Dendritic cell treated with granulocyte-macrophage colony-stimulating factor and Interleukin-4, amounts not matched to agents 40 ng/mL and 50 ng/mL, for 4 days (primary cell): ENCODE measurements at regions of chr2 and their contacts with region 1.

Region 1: GRCh38 chr2:10043906-10044601 is 704 bp downstream of the KLF11 start:
- H3K4me3 Mint-ChIP-seq: peak overlapping the region; percentile 77
- H3K27ac Mint-ChIP-seq: peak overlapping the region; percentile 91
- H3K4me1 Mint-ChIP-seq: peaks cover 75% of the 10 kb centered on the region
- H3K27me3 Mint-ChIP-seq: peaks cover 14% of the 10 kb centered on the region

Region 2: DNA sequence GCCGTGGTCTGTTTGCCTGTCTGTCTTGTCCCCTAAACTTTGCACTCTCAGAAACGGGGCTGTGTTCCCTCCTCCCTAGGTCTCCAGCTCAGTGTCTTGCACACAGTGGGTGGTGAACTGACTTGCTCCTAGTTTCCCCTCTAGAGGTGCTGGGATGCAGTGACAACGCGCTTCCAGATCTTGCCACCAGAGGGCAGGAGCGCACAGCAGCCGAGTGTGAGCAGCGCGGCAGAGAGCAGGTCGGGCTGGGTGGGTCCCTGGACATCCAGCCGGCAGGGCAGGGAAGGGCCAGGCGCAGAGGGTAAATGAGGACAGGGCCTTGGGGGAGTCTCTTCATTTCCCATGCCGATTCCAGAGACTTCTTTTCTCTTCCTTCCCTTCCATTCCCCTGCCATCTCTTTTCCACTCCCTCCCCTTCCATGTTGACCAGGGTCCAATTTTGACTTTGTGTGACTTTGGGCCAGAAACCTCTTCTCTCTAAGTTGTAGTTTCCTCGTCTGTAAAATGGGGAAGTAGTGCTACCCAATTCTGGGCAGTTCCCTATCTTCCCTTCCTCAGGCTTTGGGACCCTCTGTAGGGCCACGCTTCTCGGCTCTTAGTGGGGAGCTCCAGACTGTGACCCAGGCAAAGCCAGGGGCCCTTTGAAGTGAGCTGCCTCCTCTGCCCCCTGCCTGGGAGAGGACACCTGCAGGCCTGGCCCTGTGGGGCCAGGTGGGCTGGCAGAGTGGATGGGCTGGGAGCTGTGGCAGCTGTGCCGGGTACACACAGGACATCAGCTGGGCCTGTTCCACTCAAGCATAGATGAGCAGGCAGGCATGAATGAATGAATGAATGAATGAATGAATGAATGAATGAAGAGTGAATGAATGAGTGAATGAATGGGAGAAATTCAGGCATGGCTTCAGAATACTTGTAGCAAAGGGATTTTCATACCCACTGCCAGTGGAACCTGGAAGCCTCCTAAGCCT is 244.1 kb before region 1 on chr2:
- intact Hi-C with region 1: loop called (anchors 5 kb)
- H3K4me3 Mint-ChIP-seq: peak overlapping the region; percentile 60
- H3K27ac Mint-ChIP-seq: peak overlapping the region; percentile 88
- H3K4me1 Mint-ChIP-seq: peaks cover 63% of the 10 kb centered on the region
- H3K27me3 Mint-ChIP-seq: peaks cover 2% of the 10 kb centered on the region

Region 3: DNA sequence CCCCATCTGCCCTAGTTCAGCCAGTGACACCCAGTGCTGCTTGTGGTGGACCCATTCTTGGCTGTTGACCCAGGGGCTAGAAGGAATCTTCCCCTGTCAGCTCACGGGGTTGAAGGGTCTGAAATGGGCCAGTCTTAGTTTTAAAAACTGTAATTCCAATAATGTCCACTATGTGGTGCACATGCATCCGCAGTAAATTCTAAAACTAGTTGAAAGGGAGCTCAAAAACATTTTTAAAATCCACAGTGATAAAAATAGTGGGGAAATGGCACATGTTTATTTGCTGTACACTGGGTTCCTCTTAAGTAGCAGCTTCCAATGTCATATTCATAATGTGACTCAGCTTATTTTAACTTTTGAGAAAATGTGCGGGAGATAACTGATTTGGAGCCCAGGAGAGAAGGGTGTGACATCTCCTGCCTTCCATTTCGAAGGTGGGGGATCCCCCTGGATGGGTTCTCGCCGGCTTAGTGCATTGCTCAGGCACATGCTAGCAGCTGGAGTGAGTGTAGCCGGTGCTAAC is 59.8 kb before region 1 on chr2:
- intact Hi-C with region 1: loop called (anchors 1 kb)
- H3K4me3 Mint-ChIP-seq: no peak overlapping the region
- H3K27ac Mint-ChIP-seq: peak overlapping the region; percentile 55
- H3K4me1 Mint-ChIP-seq: peaks cover 29% of the 10 kb centered on the region
- H3K27me3 Mint-ChIP-seq: peaks cover 5% of the 10 kb centered on the region

Region 4: GRCh38 chr2:9990735-9991134 is 53.3 kb before region 1 on chr2:
- intact Hi-C with region 1: loop called (anchors 2 kb)
- H3K4me3 Mint-ChIP-seq: no peak overlapping the region
- H3K27ac Mint-ChIP-seq: peak overlapping the region; percentile 86
- H3K4me1 Mint-ChIP-seq: peaks cover 51% of the 10 kb centered on the region
- H3K27me3 Mint-ChIP-seq: no peaks in the 10 kb centered on the region

Region 5: DNA sequence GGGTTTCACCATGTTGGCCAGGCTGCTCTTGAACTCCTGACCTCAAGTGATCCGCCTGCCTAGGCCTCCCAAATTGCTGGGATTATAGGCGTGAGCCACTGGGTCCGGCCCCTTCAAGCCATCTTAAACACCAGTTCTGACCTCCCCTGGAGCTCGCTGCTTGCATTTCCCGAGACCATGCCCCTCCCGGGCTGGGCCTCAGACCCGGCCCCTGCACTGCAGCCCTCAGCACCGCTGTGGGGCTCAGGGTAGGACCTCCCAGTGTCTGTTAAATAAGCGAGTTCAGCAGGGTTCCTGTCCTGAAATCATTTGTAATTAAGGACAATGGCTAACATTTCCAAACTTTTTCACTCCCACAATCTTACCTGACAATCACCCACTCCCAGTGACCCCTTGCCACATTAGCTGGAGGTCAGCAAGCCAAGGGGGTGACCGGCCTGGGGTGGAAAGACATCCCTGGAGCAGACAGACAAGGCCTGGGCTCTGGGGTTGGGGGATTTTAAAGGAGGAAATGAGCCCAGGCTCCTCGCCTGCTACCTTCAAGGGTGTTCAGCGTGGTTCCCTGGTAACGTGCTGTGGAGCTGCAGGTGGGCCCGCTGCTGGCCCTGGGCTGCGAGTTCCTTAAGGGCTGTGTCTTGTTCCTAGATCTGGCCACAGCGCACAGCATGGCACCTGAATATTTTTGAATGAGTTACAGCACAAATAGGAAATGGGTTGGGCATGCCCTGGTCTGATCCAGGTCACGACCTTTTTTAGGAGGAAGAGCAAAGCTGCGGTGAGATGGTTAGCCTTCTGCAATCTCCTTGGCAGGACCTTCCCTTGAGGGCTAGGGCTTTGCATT is 21.1 kb after region 1 on chr2:
- intact Hi-C with region 1: no loop called
- H3K4me3 Mint-ChIP-seq: no peak overlapping the region
- H3K27ac Mint-ChIP-seq: no peak overlapping the region
- H3K4me1 Mint-ChIP-seq: peaks cover 16% of the 10 kb centered on the region
- H3K27me3 Mint-ChIP-seq: peaks cover 28% of the 10 kb centered on the region